Transverse colon (tissue), 4 donors: ENCODE measurements at regions of chr18 and their contacts with region 1.

Region 1: GRCh38 chr18:69929041-69929774 is 18.5 kb downstream of the CD226 start:
- DNase-seq: no peak
- H3K4me3 ChIP-seq: no peak overlapping the region
- H3K27ac ChIP-seq: no peak overlapping the region
- H3K4me1 ChIP-seq: no peaks in the 10 kb centered on the region
- H3K27me3 ChIP-seq: no peaks in the 10 kb centered on the region
- CTCF ChIP-seq: no peak
- EP300 ChIP-seq: no peak
- POLR2A ChIP-seq: no peak

Region 2: GRCh38 chr18:69998523-69998987 is 69.3 kb after region 1 on chr18:
- in situ Hi-C with region 1: no loop called
- intact Hi-C with region 1: loop called (anchors 2 kb)
- DNase-seq: no peak
- H3K4me3 ChIP-seq: no peak overlapping the region
- H3K27ac ChIP-seq: no peak overlapping the region
- H3K4me1 ChIP-seq: peaks cover 0 to 5% (median 0%) of the 10 kb centered on the region in 4 donors
- H3K27me3 ChIP-seq: no peaks in the 10 kb centered on the region
- CTCF ChIP-seq: no peak
- EP300 ChIP-seq: no peak
- POLR2A ChIP-seq: no peak

Region 3: DNA sequence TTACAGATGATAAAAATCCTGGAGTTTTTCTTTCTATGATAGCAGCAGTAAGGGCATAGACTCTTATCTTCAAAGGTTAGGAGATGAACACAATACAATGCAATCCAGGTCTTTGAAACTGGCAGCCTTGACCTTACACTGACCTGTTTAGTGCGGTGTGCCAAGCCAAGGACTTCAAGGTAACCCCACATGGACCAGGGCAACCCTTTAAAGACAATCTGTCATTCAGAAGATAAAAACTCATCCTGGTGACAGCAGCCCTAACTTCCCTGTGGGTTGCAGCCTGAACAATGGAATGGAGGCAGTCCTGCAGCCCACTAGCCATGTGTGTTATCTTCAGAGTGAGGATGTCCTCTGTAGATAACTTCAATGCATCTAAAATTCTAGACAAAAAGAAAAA is 198.2 kb after region 1 on chr18:
- in situ Hi-C with region 1: no loop called
- intact Hi-C with region 1: no loop called
- DNase-seq: no peak
- H3K4me3 ChIP-seq: no peak overlapping the region
- H3K27ac ChIP-seq: no peak overlapping the region
- H3K4me1 ChIP-seq: peaks cover 0 to 8% (median 0%) of the 10 kb centered on the region in 4 donors
- H3K27me3 ChIP-seq: no peaks in the 10 kb centered on the region
- CTCF ChIP-seq: no peak
- EP300 ChIP-seq: no peak
- POLR2A ChIP-seq: no peak

Region 4: DNA sequence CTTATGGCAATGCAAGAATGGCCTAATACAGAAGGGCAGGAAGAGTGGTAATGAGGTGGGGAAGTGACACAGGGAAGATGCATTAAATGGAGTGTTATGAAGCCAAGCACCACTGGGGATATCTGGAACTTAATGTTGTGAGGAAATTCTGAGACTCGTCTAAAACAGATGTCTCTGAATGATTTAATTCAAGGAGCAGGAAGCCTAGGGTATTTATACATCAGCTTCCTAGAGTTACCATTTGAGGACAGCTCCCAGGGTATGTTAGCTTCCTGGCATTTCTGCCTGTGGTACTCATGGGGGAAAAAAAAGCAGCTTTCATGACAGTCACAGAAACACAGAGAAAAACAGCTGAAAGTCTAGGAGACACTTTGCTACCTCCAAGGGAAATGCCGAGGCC is 1625.5 kb after region 1 on chr18:
- in situ Hi-C with region 1: no loop called
- intact Hi-C with region 1: loop called (anchors 5 kb)
- DNase-seq: no peak
- H3K4me3 ChIP-seq: no peak overlapping the region
- H3K27ac ChIP-seq: no peak overlapping the region
- H3K4me1 ChIP-seq: no peaks in the 10 kb centered on the region
- H3K27me3 ChIP-seq: no peaks in the 10 kb centered on the region
- CTCF ChIP-seq: no peak
- EP300 ChIP-seq: no peak
- POLR2A ChIP-seq: no peak